Activated CD4-positive, alpha-beta T cell treated with anti-CD3 and anti-CD28 coated beads for 36 hours (primary cell): ENCODE measurements at regions of chr20 and their contacts with region 1.

Region 1: DNA sequence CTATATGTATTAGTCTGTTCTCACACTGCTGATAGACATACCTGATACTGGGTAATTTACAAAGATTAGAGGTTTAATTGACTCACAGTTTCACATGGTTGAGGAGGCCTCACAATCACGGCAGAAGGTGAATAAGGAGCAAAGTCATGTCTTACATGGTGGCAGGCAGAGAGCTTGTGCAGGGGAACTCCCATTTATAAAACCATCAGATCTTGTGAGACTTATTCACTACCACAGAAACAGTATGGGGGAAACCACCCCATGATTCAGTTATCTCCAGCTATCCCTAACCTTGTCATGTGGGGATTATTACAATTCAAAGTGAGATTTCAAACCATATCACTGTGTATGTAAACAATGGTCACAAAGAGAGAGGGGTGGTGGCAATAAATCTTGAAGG is 6.6 kb downstream of the CST8 start:
- DNase-seq: peak; percentile 57
- ATAC-seq: peak; percentile 95
- H3K4me3 Mint-ChIP-seq: no peak overlapping the region
- H3K27ac Mint-ChIP-seq: no peak overlapping the region
- H3K4me1 Mint-ChIP-seq: peaks cover 15% of the 10 kb centered on the region
- H3K27me3 Mint-ChIP-seq: peaks cover 36% of the 10 kb centered on the region

Region 2: GRCh38 chr20:23147964-23148730 is 349.4 kb before region 1 on chr20:
- CTCF ChIA-PET with region 1: no interaction called
- POLR2A ChIA-PET with region 1: no interaction called
- intact Hi-C with region 1: loop called in 1 of 2 experiments (anchors 5 kb)
- DNase-seq: peak; percentile 76
- ATAC-seq: peak; percentile 93
- H3K4me3 Mint-ChIP-seq: no peak overlapping the region
- H3K27ac Mint-ChIP-seq: peak overlapping the region; percentile 88
- H3K4me1 Mint-ChIP-seq: peaks cover 29% of the 10 kb centered on the region
- H3K27me3 Mint-ChIP-seq: peaks cover 8% of the 10 kb centered on the region

Region 3: GRCh38 chr20:23357767-23358591 is 139.6 kb before region 1 on chr20:
- CTCF ChIA-PET with region 1: no interaction called
- POLR2A ChIA-PET with region 1: no interaction called
- intact Hi-C with region 1: loop called in 1 of 2 experiments (anchors 1 kb)
- DNase-seq: peak; percentile 100
- ATAC-seq: peak; percentile 84
- H3K4me3 Mint-ChIP-seq: peak overlapping the region; percentile 88
- H3K27ac Mint-ChIP-seq: peak overlapping the region; percentile 93
- H3K4me1 Mint-ChIP-seq: peaks cover 15% of the 10 kb centered on the region
- H3K27me3 Mint-ChIP-seq: no peaks in the 10 kb centered on the region

Region 4: GRCh38 chr20:23366384-23366783 is 131.2 kb before region 1 on chr20:
- CTCF ChIA-PET with region 1: no interaction called
- POLR2A ChIA-PET with region 1: no interaction called
- intact Hi-C with region 1: loop called (anchors 1 kb)
- DNase-seq: no peak
- ATAC-seq: peak; percentile 7
- H3K4me3 Mint-ChIP-seq: no peak overlapping the region
- H3K27ac Mint-ChIP-seq: peak overlapping the region; percentile 59
- H3K4me1 Mint-ChIP-seq: peaks cover 51% of the 10 kb centered on the region
- H3K27me3 Mint-ChIP-seq: no peaks in the 10 kb centered on the region

Region 5: DNA sequence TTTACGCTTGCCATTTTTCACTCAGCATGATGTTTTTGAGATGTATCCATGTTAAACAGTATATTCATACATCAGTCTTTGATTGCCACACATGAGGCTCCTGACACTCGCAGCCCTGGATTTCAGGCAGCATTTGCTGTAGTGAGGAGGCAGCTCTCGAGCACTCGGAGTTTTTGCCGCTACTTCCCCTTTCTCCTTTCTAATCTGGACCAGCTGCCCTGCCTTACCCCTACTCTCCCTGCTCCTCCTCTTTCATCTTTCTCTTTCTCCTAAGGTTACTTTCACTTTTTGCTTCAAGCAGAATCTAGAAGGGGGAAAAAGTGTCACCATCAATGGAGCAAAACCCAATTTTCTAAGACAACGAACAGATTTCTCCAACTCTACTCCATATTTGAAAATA is 146.1 kb after region 1 on chr20:
- CTCF ChIA-PET with region 1: no interaction called
- POLR2A ChIA-PET with region 1: no interaction called
- intact Hi-C with region 1: no loop called
- DNase-seq: no peak
- ATAC-seq: no peak
- H3K4me3 Mint-ChIP-seq: no peak overlapping the region
- H3K27ac Mint-ChIP-seq: no peak overlapping the region
- H3K4me1 Mint-ChIP-seq: no peaks in the 10 kb centered on the region
- H3K27me3 Mint-ChIP-seq: peaks cover 3% of the 10 kb centered on the region